Dorsolateral prefrontal cortex (tissue), 120 donors: ENCODE measurements at regions of chrX and their contacts with region 1.

Region 1: DNA sequence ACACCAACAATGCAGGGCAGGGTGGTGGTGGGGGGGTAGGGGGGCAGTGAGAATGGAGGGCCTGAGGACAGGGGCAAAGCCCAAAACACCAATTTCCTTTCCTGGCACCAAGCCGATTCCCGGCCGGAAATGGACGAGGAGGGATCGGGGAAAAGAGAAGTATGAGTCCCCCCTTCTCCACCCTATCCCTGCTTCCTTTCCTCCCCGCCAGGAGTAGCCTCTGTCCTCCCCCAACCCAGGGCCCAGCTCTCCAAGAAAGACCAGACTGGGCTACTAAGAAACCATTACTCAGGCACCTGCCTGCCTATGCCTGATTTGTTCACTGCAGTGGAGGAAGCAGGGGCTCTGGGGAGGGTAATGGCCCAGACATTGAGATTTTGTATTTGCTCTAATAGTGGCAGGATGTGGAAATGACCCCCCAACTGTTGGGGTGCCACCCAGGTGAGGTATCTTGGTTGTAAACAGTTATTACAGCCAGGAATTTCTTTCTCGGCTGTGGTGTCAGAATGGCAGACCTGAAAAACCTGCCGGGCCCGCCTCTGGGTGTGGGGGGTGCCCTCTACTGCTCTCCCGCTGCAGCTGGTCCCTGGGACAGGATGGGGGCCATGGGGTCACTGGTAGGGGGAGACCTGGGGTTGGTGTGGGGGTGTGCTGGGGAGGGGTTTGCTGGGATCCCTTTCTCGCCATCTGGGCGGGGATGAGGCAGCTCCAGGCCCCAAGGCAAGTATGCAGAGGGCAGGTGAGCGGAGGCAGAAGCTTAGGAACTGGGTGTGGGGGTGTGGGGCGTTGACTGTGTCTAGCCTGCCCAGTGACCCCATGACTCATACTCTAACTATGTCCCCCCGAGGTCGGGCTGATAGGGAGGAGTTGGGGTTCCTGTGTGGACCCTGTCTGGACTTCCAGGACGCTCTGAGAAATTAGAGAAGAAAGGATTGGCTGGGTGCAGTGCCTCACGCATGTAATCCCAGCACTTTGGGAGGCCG is 701 bp downstream of the CCDC120 start:
- DNase-seq: no peak
- H3K4me3 ChIP-seq: peak overlapping the region in 1 of 59 donors; percentile 3
- H3K27ac ChIP-seq: no peak overlapping the region
- H3K27me3 ChIP-seq: peaks cover 0 to 35% (median 2%) of the 10 kb centered on the region in 45 donors
- CTCF ChIP-seq: no peak

Region 2: GRCh38 chrX:48606091-48606490 is 453.4 kb before region 1 on chrX:
- intact Hi-C with region 1: loop called in 1 of 2 experiments (anchors 10 kb)
- DNase-seq: no peak
- H3K4me3 ChIP-seq: no peak overlapping the region
- H3K27ac ChIP-seq: no peak overlapping the region
- H3K27me3 ChIP-seq: peaks cover 0 to 27% (median 0%) of the 10 kb centered on the region in 45 donors
- CTCF ChIP-seq: no peak